Spleen (tissue), 13 donors: ENCODE measurements at regions of chr4 and their contacts with region 1.

Region 1: DNA sequence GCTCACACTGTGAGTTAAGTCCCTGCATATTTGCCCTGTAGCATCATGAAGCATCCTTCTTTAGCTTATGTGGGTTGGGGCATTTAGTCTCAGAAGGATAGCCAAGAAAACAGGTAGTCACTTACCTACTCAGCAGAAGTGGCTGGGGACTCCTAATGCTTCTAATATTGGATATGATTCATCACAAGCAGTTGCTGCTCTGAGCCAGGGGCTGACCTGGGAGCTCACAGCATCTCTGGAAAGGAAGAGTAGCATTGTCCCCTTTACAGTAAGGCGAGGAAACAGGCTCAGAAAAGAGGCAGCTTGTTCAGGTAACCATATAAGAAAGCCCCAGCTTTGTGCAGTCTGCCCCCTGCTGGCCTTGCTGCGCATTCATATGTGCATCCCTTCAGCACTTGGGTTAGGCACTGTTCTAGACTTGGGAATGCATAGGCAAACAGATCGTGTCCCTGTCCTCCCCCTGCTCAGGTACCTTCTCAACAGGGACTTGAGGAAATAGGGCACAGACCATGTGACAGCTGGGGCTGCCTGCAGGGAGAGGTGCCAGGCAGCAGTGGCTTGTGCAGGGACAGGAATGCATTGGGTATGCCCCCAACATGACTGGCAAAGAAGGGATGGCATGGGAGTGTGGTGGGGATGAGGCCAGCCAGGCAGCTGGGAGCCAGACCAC is 35.7 kb upstream of the TBC1D14 start:
- DNase-seq: peak; percentile 93
- H3K4me3 ChIP-seq: no peak overlapping the region
- H3K27ac ChIP-seq: peak overlapping the region in 2 of 8 donors; percentile 74 to 76
- H3K4me1 ChIP-seq: peaks cover 13 to 64% (median 31%) of the 10 kb centered on the region in 6 donors
- H3K27me3 ChIP-seq: no peaks in the 10 kb centered on the region
- CTCF ChIP-seq: peak; percentile 60 to 93 (median 86)
- POLR2A ChIP-seq: no peak

Region 2: DNA sequence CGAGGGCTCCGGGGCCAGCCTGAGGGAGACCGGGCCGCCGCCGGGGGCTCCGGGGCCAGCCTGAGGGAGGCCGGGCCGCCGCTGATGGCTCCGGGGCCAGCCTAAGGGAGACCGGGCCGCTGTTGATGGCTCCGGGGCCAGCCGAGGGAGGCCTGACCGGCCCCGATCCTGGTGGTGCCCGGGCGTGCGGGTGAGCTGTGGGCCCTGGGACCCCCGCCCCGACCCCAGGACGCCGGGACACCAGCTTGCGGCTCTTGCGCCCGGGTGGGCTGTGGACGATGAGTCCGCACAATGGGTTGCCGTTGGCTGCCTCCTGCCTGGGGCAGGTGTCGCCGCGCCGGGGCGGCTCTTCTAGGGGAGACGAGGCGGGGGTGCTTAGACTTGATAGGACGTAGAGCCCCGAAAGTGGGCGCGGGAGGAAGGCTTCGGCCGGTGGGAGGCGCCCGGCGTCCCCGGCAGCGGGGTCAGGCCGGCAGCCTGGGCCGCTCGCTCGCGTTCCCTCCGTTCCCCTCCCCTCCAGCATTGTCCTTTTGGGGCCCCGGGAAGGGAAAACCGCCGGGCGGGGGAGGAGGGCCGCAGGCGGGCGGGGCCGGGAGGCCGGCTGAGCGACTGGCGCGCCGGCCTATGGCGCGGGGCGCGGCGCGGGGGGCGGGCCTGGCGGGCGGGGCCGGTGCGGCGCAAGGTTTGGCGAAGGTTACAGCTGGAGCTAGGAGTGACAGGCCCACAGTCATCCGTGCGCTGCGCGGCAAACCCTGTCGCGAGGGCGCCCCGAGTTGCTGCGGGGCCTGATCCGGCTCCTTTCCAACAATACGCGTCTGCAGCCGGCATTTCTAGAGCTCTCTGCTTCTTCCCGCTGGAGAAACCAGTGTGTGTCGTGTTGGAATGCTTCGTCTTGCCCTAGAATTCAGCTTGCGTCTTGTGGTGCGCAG is 90.6 kb before region 1 on chr4:
- intact Hi-C with region 1: loop called (anchors 10 kb)
- DNase-seq: peak; percentile 97
- H3K4me3 ChIP-seq: peak overlapping the region; percentile 66 to 95 (median 91)
- H3K27ac ChIP-seq: peak overlapping the region; percentile 94 to 100 (median 99)
- H3K4me1 ChIP-seq: peaks cover 17 to 69% (median 51%) of the 10 kb centered on the region in 6 donors
- H3K27me3 ChIP-seq: no peaks in the 10 kb centered on the region
- CTCF ChIP-seq: peak in 4 of 11 experiments; percentile 10 to 35 (median 23)
- POLR2A ChIP-seq: peak in 1 of 3 donors; percentile 72

Region 3: DNA sequence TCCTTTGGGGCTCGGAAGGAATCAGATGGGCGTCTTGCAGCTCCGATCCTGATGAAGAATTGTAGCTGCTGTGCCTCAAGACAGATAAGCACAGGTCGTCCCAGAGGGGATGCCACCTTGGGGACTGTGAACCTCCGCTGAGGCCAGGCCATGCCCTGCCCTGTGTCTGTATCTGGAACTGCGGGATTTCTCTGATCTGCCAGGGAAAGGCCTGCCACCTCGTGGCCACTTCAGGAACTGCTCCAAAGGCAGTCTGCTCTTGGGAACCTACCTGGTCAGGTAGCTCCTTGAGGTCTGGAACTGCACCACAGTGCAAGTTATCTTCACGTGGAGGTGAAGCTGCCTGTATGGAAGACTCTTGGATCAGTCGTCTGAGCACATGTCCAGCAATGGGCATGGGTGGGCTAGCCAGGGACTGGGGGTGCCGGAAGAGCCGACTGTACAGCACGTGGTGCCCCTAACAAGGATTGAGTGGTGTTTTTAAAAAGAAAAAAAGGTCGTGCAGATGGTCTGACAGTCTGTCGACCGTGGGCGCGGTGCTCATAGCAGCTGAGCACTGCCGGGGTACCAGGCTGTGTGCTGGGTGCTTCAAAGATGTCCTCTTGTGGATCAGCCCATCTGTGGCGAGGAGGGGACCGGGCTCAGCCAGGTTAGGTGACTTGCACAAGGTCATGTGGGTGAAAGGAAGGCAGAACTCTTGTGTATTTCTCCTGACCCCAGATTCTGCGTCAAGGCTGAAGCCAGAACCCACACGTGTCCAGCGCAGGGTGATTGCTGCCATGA is 197.0 kb after region 1 on chr4:
- intact Hi-C with region 1: loop called (anchors 10 kb)
- DNase-seq: peak; percentile 95
- H3K4me3 ChIP-seq: no peak overlapping the region
- H3K27ac ChIP-seq: no peak overlapping the region
- H3K4me1 ChIP-seq: peaks cover 16 to 44% (median 35%) of the 10 kb centered on the region in 6 donors
- H3K27me3 ChIP-seq: peaks cover 0 to 9% (median 0%) of the 10 kb centered on the region in 7 donors
- CTCF ChIP-seq: peak; percentile 98 to 99 (median 99)
- POLR2A ChIP-seq: no peak

Region 4: DNA sequence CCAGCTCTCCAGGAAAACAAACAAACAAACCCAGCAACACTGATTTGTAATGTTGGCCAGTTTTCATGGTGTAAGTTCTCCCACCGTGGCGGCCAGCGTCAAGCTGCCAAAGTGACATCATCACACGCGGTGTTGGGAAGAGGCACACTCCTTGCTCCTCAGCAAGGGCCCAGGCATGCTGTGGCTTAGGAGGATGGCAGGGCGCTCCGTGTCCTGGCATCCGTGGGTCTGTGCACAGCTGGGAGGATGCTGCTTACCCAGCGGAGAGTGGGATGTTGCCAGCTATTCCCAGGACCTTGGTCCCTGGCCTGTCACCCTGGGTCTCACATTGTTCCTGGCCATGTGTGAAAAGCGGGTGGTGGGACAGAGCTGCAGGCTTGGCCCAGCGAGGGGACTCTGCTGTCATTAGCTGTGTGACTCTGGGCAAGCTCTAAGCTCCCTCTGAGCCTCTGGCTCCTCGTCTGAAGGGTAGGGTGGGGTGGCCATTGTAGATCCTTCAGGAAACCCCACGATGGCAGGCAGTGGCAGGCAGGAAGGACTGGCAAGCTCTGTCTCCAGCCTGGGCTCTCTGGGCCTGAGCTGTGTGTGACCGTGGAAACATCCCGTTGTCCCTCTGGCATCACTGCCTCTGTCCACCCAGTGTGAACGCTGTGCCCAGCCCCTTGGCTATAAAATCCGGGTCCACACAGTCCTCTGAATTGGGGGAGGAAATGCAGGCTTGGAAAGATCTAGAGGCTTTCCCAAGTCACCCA is 550.0 kb after region 1 on chr4:
- intact Hi-C with region 1: no loop called
- DNase-seq: peak; percentile 71
- H3K4me3 ChIP-seq: no peak overlapping the region
- H3K27ac ChIP-seq: peak overlapping the region in 1 of 8 donors; percentile 39
- H3K4me1 ChIP-seq: peaks cover 0 to 12% (median 2%) of the 10 kb centered on the region in 6 donors
- H3K27me3 ChIP-seq: no peaks in the 10 kb centered on the region
- CTCF ChIP-seq: no peak
- POLR2A ChIP-seq: no peak